ENCODE measurements at regions of chr11 and their contacts with region 1.

Region 1: DNA sequence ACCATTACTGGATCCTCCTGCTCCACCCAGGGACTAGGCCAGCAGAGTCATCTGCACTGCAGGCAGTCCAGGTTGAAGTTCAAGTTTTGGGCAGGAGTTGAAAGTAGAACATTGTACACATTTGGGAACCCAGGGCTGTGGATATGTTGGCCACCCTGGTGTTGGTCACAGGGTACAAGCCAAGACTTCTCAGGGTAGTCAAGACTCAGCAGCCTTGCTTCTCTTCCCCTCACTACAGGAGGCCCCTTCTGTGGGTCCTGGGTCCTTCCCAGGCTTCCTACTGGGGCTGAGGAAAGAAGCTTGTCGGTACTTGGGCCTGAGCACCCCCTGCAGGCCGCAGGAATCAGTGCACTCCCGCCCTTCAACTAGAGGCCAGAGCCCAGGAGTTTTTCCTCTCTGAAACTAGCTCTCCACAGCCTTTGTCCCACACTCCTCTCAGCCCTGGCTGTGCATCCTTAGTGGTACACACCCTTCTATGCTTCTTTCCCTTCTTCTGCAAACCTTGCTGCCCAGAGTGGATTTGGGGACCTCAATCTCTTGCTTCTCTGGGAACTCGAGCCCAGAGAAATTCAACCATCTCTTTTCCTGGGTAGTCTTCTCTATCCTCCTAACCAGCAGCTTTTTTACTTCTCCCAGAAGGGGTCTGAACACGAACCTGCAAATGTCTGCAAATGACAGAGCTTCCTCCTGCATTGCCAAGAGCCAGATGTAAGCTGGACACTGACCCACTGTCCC is 2.6 kb upstream of the HPX start:
- H3K4me3 Mint-ChIP-seq: no peak overlapping the region
- H3K27ac Mint-ChIP-seq: no peak overlapping the region
- H3K4me1 Mint-ChIP-seq: no peaks in the 10 kb centered on the region
- H3K27me3 Mint-ChIP-seq: no peaks in the 10 kb centered on the region

Region 2: GRCh38 chr11:6251120-6251733 is 192.2 kb before region 1 on chr11:
- intact Hi-C with region 1: no loop called
- H3K4me3 Mint-ChIP-seq: no peak overlapping the region
- H3K27ac Mint-ChIP-seq: no peak overlapping the region
- H3K4me1 Mint-ChIP-seq: peaks cover 5% of the 10 kb centered on the region
- H3K27me3 Mint-ChIP-seq: peaks cover 2% of the 10 kb centered on the region

Region 3: GRCh38 chr11:6377902-6378639 is 65.4 kb before region 1 on chr11:
- intact Hi-C with region 1: loop called (anchors 1 kb)
- H3K4me3 Mint-ChIP-seq: no peak overlapping the region
- H3K27ac Mint-ChIP-seq: no peak overlapping the region
- H3K4me1 Mint-ChIP-seq: peaks cover 8% of the 10 kb centered on the region
- H3K27me3 Mint-ChIP-seq: no peaks in the 10 kb centered on the region

Region 4: DNA sequence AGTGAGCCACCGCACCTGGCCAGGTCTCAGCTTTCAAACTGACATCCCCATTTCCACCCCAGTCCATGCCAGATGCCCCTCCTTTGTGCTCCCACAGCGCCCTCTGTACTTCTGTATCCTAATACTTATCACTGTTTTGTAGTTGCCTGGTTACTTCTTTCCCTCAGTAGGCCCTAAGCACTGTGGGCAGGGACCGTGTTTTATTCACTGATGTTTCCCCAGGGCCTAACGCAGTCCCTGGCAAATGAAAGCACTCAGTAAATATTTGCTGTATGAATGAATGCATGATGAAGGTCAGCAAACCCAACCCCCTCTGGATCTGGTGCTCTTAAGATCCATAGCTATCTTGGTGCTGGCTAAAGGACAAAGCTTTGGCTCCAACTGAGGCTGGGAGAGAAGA is 32.5 kb after region 1 on chr11:
- intact Hi-C with region 1: loop called (anchors 2 kb)
- H3K4me3 Mint-ChIP-seq: no peak overlapping the region
- H3K27ac Mint-ChIP-seq: no peak overlapping the region
- H3K4me1 Mint-ChIP-seq: peaks cover 62% of the 10 kb centered on the region
- H3K27me3 Mint-ChIP-seq: no peaks in the 10 kb centered on the region

Region 5: GRCh38 chr11:6505577-6506240 is 62.3 kb after region 1 on chr11:
- intact Hi-C with region 1: loop called (anchors 2 kb)
- H3K4me3 Mint-ChIP-seq: no peak overlapping the region
- H3K27ac Mint-ChIP-seq: no peak overlapping the region
- H3K4me1 Mint-ChIP-seq: no peaks in the 10 kb centered on the region
- H3K27me3 Mint-ChIP-seq: no peaks in the 10 kb centered on the region